ENCODE measurements at regions of chr16 and their contacts with region 1.

Region 1: DNA sequence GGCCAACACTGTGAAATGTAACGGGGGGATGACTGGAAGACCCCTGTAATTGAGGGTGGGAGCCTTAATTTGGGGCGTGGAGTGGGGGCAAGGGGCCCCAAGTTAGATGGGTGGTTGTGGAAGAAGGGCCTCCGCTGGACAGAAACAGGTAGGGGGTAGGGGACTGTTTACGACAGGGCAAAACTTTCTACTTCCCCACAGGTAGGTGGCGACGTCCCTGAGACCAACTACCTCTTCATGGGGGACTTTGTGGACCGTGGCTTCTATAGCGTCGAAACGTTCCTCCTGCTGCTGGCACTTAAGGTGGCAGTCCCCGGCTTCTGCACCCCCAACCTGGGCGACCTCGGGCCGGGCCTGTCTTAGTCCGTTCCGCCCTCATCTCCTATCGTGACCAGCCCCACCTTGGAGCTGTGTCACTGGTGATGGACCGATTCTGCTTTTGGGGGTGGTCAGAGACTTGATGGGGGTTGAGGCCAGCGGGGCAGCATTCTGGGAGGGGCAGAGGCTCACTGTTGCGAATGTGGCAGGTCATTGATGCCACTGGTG is 6.8 kb downstream of the PPP4C start:
- DNase-seq: no peak
- ATAC-seq: peak; percentile 15; the same call in 2 of the 3 replicates
- H3K4me3 ChIP-seq: no peak overlapping the region
- H3K27ac ChIP-seq: peak overlapping the region; percentile 35
- H3K4me1 ChIP-seq: peaks cover 49% of the 10 kb centered on the region
- H3K27me3 ChIP-seq: no peaks in the 10 kb centered on the region
- CTCF ChIP-seq: peak; percentile 44
- EP300 ChIP-seq: no peak
- POLR2A ChIP-seq: no peak
- RAD21 ChIP-seq: no peak

Region 2: DNA sequence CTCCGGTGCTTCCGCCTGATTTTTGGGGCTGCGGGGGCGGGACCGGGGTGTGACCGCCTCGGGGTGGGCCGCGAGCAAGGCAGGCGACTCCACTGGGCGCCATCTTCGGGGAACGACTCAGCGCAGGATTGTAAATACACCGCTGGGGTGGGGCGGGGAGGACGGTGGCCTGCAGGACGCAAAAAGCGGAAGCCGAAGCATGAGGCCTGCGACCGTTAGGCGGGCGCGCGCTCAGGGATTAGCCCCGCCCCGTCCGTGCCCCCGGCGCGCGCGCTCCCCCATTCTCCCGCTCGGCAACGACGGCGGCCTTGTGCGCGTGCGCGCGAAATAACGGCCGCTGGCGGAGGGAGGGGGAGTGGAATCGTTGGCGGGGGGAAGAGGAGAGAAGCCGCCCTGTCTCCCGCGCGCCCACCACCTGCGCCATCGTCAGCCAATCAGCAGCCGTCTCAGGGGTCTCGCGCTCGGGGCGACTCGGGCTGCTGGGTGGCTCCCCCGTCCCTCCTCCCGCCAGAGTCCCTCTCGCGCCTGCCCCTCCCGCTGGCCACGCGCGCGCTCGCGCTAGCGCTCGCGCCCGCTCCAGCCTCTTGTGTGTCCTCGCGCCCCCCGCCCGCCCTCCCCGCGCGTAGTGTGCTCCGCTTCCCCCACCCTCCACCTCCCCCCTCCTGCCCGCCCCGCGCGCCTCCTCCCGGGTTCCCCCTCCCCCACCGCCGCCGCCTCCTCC is 277.1 kb before region 1 on chr16:
- CTCF ChIA-PET with region 1: no interaction called
- POLR2A ChIA-PET with region 1: no interaction called
- in situ Hi-C with region 1: no loop called
- intact Hi-C with region 1: no loop called
- DNase-seq: peak; percentile 97
- ATAC-seq: peak; percentile 78
- H3K4me3 ChIP-seq: peak overlapping the region; percentile 59 to 85 (median 77)
- H3K27ac ChIP-seq: peak overlapping the region; percentile 88
- H3K4me1 ChIP-seq: peaks cover 50% of the 10 kb centered on the region
- H3K27me3 ChIP-seq: no peaks in the 10 kb centered on the region
- CTCF ChIP-seq: peak; percentile 36
- EP300 ChIP-seq: peak in 1 of 2 experiments; percentile 64; a peak in 1 of 4 replicates
- POLR2A ChIP-seq: peak in 1 of 2 experiments; percentile 82; a peak in 2 of 4 replicates
- RAD21 ChIP-seq: peak; percentile 66

Region 3: GRCh38 chr16:30149250-30149930 is 66.8 kb after region 1 on chr16:
- CTCF ChIA-PET with region 1: no interaction called
- POLR2A ChIA-PET with region 1: no interaction called
- in situ Hi-C with region 1: no loop called
- intact Hi-C with region 1: no loop called
- DNase-seq: no peak
- ATAC-seq: no peak
- H3K4me3 ChIP-seq: no peak overlapping the region
- H3K27ac ChIP-seq: no peak overlapping the region
- H3K4me1 ChIP-seq: peaks cover 22% of the 10 kb centered on the region
- H3K27me3 ChIP-seq: no peaks in the 10 kb centered on the region
- CTCF ChIP-seq: no peak
- EP300 ChIP-seq: no peak
- POLR2A ChIP-seq: no peak
- RAD21 ChIP-seq: no peak

Region 4: DNA sequence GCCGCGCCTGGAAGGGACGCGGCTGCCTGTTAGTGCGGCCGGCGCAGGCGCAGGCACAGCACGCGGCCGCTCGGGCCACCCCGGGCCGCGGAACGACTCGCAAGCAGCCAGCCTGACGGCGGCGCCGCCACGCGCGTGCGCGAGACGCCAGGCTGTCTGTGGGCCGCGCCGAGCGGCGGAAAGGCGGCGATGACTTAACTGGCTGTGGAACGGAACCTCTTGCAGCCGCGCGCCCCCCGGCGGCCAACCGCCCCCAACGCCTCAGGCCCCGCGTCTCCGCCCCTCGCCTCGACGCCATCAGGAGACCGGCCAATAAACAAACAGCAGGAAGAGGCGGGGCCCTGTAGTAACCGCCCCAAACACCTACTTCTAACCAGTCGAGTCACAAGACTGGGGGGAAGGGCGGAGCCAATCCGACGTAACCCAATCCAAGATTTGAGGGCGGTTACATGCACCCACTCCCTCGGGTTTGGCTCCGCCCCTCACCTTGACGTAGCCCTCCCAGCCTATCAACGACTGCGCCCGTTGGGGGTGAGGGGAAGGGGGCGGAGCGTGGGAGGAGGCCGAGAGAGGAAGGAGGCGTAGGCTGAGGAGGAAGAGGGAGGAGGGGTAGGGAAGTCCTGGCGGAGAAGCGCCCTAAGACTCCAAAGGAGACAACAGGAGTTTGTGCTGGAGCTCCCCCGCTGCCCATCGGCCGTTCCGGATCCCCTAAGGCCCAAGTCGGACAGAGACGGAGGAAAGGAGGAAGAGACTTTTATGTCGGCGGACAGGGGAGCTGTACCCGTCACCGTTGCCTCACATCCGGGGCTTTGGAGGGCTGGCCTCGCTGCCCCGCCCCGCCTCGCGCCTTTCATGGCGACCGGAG is 575.5 kb after region 1 on chr16 and contains the start of gene FBRS:
- CTCF ChIA-PET with region 1: no interaction called
- POLR2A ChIA-PET with region 1: no interaction called
- in situ Hi-C with region 1: no loop called
- intact Hi-C with region 1: loop called (anchors 10 kb)
- DNase-seq: peak; percentile 100
- ATAC-seq: peak; percentile 85
- H3K4me3 ChIP-seq: peak within 1 kb of the TSS; percentile 78 to 89 (median 82)
- H3K27ac ChIP-seq: peak within 1 kb of the TSS; percentile 93
- H3K4me1 ChIP-seq: peaks cover 36% of the 10 kb centered on the region
- H3K27me3 ChIP-seq: no peaks in the 10 kb centered on the region; a peak in 1 of 5 replicates
- CTCF ChIP-seq: peak; percentile 97
- EP300 ChIP-seq: peak in 1 of 2 experiments; percentile 22; a peak in 2 of 4 replicates
- POLR2A ChIP-seq: peak; percentile 76 to 86
- RAD21 ChIP-seq: peak; percentile 97
- total RNA-seq, gene FBRS: 10.1 and 16.2 TPM in 2 replicates